HepG2 (cell line): ENCODE measurements at regions of chr15 and their contacts with region 1.

Region 1: DNA sequence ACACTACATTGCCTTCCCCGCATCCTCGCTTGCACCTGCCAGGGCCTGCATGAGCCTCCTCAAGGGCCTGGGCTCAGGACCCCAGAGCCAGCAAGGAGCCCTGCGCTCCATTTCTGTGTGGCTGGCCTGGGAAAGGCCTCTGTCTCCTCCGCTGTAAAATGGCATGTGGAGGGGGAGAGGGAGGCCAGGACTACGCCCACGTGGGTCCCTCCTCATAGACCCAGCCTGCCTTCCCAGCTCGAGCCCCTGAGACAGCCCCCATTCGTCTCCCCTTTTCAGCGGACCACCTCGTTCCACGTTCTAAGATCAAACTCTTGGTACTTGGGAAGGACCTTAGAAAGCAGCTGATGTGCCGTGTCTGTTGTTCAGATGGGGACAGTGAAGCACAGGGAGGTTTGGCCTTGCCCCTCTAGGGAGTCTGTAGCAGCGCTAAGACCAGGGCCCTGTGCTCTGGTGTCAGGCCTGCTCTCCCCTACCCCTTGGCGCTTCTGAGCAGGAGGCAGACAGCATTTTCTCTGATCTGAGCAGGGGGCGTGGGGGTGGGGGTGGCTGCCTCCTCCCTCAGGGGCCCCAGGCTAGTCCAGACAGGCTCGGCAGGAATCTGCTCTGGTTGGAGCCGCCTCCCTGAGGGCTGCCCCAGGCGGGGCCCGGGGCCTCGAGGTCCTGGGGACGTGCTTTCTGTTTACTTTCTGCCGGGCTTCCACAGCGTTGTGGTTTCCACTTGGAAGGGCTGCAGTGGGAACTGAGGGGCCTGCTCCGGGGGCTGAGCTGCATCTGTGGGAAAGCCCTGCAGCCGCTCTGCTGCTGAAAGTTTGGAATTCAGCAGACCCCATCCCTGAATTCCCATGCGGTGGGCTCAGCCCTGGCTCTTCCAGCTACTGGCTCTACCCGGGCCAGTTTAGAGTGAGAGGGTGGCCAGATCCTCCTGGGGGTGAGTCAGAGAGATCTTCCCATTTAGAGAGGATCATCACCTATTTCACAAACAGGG is 105.6 kb downstream of the LINGO1 start:
- DNase-seq: peak; percentile 70
- ATAC-seq: peak; percentile 87
- H3K4me3 ChIP-seq: peak overlapping the region; percentile 35 to 57 (median 42); a peak in 5 of 6 replicates
- H3K27ac ChIP-seq: peak overlapping the region; percentile 46
- H3K4me1 ChIP-seq: peaks cover 59% of the 10 kb centered on the region
- H3K27me3 ChIP-seq: no peaks in the 10 kb centered on the region
- CTCF ChIP-seq: peak; percentile 11; the same call in 1 of the 2 replicates
- EP300 ChIP-seq: no peak
- POLR2A ChIP-seq: peak; percentile 21 to 33; a peak in 1 of 4 replicates
- RAD21 ChIP-seq: no peak

Region 2: GRCh38 chr15:77507911-77508310 is 19.2 kb before region 1 on chr15:
- CTCF ChIA-PET with region 1: no interaction called
- POLR2A ChIA-PET with region 1: interaction called, 19 read pairs
- in situ Hi-C with region 1: no loop called
- intact Hi-C with region 1: no loop called
- DNase-seq: peak; percentile 74
- ATAC-seq: peak; percentile 88
- H3K4me3 ChIP-seq: peak overlapping the region; percentile 8 to 62 (median 39)
- H3K27ac ChIP-seq: peak overlapping the region; percentile 14
- H3K4me1 ChIP-seq: peaks cover 79% of the 10 kb centered on the region
- H3K27me3 ChIP-seq: no peaks in the 10 kb centered on the region
- CTCF ChIP-seq: no peak
- EP300 ChIP-seq: no peak
- POLR2A ChIP-seq: no peak
- RAD21 ChIP-seq: no peak